Left cardiac atrium (tissue), 4 donors: ENCODE measurements at regions of chr13 and their contacts with region 1.

Region 1: DNA sequence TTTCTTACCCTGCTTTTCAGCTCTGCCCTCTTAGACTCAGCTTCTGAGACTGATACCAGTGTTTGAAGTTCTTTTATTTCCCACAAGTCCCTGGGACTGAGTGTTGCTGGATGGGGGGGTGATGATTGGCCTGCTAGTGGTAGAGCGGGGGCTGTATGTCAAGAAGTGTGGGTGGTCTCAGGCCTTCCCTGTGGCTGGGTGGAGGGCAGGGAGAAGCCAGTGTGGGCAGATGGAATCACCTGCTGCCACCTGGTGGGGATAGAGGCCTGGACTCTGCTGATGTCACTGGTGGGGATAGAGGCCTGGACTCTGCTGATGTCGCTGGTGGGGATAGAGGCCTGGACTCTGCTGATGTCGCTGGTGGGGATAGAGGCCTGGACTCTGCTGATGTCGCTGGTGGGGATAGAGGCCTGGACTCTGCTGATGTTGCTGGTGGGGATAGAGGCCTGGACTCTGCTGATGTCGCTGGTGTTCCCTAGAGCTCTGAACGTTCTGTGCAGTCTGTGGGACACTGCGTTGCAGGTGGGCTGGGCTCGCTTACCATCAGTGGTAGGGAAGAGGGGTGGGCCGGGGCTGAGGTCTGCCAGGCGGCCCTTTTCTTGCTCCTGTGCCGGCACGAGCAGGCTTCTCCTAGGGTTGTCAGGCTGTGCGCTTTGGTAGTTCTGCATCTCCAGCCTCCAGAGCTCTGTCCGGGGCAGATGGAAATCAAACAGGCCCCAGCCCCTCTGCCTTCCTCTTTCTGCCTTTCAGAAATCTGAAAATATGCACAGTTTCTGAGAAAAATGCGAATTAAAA is 101.3 kb downstream of the ARHGEF7 start:
- DNase-seq: no peak
- ATAC-seq: peak; percentile 56 to 60

Region 2: GRCh38 chr13:110915057-110915873 is 301.1 kb before region 1 on chr13 and contains the start of gene ANKRD10:
- intact Hi-C with region 1: loop called in 1 of 2 experiments (anchors 10 kb)
- DNase-seq: peak; percentile 99
- ATAC-seq: peak; percentile 91 to 94
- total RNA-seq, gene ANKRD10: 48.7 to 78.7 TPM

Region 3: GRCh38 chr13:111066544-111066943 is 149.8 kb before region 1 on chr13:
- intact Hi-C with region 1: loop called in 1 of 2 experiments (anchors 2 kb)
- DNase-seq: no peak
- ATAC-seq: peak; percentile 25 to 61

Region 4: GRCh38 chr13:111153279-111153976 is 62.9 kb before region 1 on chr13:
- intact Hi-C with region 1: loop called in 1 of 2 experiments (anchors 2 kb)
- DNase-seq: peak; percentile 93
- ATAC-seq: peak; percentile 97 to 98